ENCODE measurements at regions of chr1 and their contacts with region 1.

Region 1: GRCh38 chr1:36239941-36240637 is 15.8 kb downstream of the THRAP3 start:
- DNase-seq: no peak
- ATAC-seq: no peak
- H3K4me3 Mint-ChIP-seq: no peak overlapping the region
- H3K27ac Mint-ChIP-seq: no peak overlapping the region
- H3K4me1 Mint-ChIP-seq: peaks cover 46% of the 10 kb centered on the region
- H3K27me3 Mint-ChIP-seq: no peaks in the 10 kb centered on the region

Region 2: GRCh38 chr1:36115200-36115669 is 124.9 kb before region 1 on chr1:
- CTCF ChIA-PET with region 1: no interaction called
- POLR2A ChIA-PET with region 1: no interaction called
- intact Hi-C with region 1: no loop called
- DNase-seq: no peak
- ATAC-seq: no peak
- H3K4me3 Mint-ChIP-seq: no peak overlapping the region
- H3K27ac Mint-ChIP-seq: no peak overlapping the region
- H3K4me1 Mint-ChIP-seq: peaks cover 4% of the 10 kb centered on the region
- H3K27me3 Mint-ChIP-seq: no peaks in the 10 kb centered on the region

Region 3: DNA sequence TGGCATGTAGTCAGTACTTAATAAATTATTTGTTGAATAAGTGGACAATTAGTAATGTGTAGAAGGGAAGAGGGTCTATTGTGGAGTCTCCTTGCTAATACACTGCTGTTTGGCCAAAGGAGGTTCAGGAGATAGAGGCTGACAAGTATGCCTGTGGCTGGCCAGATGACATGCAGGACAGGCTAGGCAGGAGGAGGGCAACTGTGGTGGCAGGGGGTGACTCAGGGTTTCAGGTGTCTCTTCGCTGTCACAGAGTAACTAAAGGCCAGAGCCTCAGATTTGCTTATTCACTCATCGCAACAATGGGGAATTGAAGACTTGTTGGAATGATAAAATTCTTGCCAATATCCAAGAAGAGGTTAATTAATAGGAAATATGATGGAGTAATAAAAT is 17.3 kb after region 1 on chr1:
- CTCF ChIA-PET with region 1: interaction called, 5 read pairs
- POLR2A ChIA-PET with region 1: no interaction called
- intact Hi-C with region 1: loop called in 1 of 2 experiments (anchors 2 kb)
- DNase-seq: peak; percentile 33
- ATAC-seq: peak; percentile 60
- H3K4me3 Mint-ChIP-seq: no peak overlapping the region
- H3K27ac Mint-ChIP-seq: no peak overlapping the region
- H3K4me1 Mint-ChIP-seq: peaks cover 43% of the 10 kb centered on the region
- H3K27me3 Mint-ChIP-seq: no peaks in the 10 kb centered on the region

Region 4: GRCh38 chr1:36269408-36269838 is 29.3 kb after region 1 on chr1:
- CTCF ChIA-PET with region 1: no interaction called
- POLR2A ChIA-PET with region 1: no interaction called
- intact Hi-C with region 1: loop called in 1 of 2 experiments (anchors 5 kb)
- DNase-seq: no peak
- ATAC-seq: no peak
- H3K4me3 Mint-ChIP-seq: no peak overlapping the region
- H3K27ac Mint-ChIP-seq: no peak overlapping the region
- H3K4me1 Mint-ChIP-seq: peaks cover 15% of the 10 kb centered on the region
- H3K27me3 Mint-ChIP-seq: no peaks in the 10 kb centered on the region